ENCODE measurements at regions of chr19 and their contacts with region 1.

Region 1: GRCh38 chr19:2151339-2152229 is at the start of gene AP3D1:
- DNase-seq: peak; percentile 100
- H3K4me3 ChIP-seq: peak within 1 kb of the TSS; percentile 78 to 98 (median 91)
- H3K27ac ChIP-seq: peak within 1 kb of the TSS; percentile 84 to 89 (median 88)
- H3K4me1 ChIP-seq: peaks cover 27 to 55% (median 49%) of the 10 kb centered on the region in 4 donors
- H3K27me3 ChIP-seq: no peaks in the 10 kb centered on the region
- CTCF ChIP-seq: no peak
- EP300 ChIP-seq: no peak
- POLR2A ChIP-seq: no peak
- total RNA-seq, gene AP3D1: 76.0 to 156 (median 93.7) TPM

Region 2: GRCh38 chr19:2221918-2222317 is 70.3 kb after region 1 on chr19:
- intact Hi-C with region 1: loop called (anchors 5 kb)
- DNase-seq: no peak
- H3K4me3 ChIP-seq: no peak overlapping the region
- H3K27ac ChIP-seq: no peak overlapping the region
- H3K4me1 ChIP-seq: peaks cover 0 to 13% (median 6%) of the 10 kb centered on the region in 4 donors
- H3K27me3 ChIP-seq: no peaks in the 10 kb centered on the region
- CTCF ChIP-seq: peak in 2 of 3 experiments; percentile 16 to 32
- EP300 ChIP-seq: no peak
- POLR2A ChIP-seq: no peak

Region 3: GRCh38 chr19:2236314-2237050 is 84.9 kb after region 1 on chr19 and contains the starts of genes PLEKHJ1 and SF3A2:
- intact Hi-C with region 1: loop called (anchors 5 kb)
- DNase-seq: peak; percentile 99
- H3K4me3 ChIP-seq: peak within 1 kb of the TSS; percentile 88 to 100 (median 98)
- H3K27ac ChIP-seq: peak within 1 kb of the TSS; percentile 94 to 99 (median 96)
- H3K4me1 ChIP-seq: peaks cover 66 to 86% (median 71%) of the 10 kb centered on the region in 4 donors
- H3K27me3 ChIP-seq: no peaks in the 10 kb centered on the region
- CTCF ChIP-seq: peak; percentile 99 to 100 (median 100)
- EP300 ChIP-seq: no peak
- POLR2A ChIP-seq: peak; percentile 74
- total RNA-seq, gene PLEKHJ1: 41.9 to 69.8 (median 55.3) TPM
- total RNA-seq, gene SF3A2: 29.5 to 56.9 (median 35.3) TPM

Region 4: DNA sequence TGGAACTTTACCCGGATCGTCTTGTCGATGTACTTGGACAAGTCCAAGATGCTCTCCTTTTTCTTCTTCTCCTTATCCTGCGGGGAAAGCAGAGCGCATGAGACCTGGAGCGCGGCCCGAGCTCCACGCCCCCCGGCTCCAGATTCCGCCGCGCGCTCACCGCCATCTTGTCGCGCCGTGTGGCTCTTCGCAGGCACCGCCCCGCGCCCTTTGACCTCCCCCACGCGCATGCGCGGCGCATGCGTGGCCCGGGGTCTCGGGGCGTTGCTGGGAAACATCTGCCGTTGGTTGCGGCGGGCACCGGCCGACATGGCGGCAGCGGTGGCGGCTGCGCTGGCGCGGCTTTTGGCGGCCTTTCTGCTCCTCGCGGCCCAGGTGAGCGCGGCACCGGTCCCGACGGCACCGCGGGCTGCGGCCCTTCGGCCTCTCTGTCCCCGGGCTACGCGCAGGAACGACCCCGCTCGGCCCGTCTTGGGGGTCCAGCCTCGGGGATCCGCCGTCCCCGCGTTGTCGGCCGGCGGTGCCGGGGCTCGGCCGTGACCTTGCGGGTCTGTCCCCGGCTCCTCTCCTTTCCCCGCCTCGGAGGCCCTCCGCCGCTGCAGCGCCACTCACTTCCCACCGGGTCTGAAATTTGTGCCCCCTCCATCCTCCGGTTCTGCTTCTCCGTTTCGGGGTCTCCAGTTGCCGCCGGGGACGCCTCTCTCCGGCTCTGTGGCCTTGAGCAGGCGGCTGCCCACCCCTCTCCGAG is 177.0 kb after region 1 on chr19 and contains the starts of genes LSM7 and SPPL2B:
- intact Hi-C with region 1: loop called (anchors 5 kb)
- DNase-seq: peak; percentile 97
- H3K4me3 ChIP-seq: peak within 1 kb of the TSS; percentile 87 to 100 (median 92)
- H3K27ac ChIP-seq: peak within 1 kb of the TSS; percentile 76 to 85 (median 81)
- H3K4me1 ChIP-seq: peaks cover 55 to 74% (median 67%) of the 10 kb centered on the region in 4 donors
- H3K27me3 ChIP-seq: no peaks in the 10 kb centered on the region
- CTCF ChIP-seq: peak in 1 of 3 experiments; percentile 34
- EP300 ChIP-seq: no peak
- POLR2A ChIP-seq: no peak
- total RNA-seq, gene LSM7: 76.4 to 113 (median 106) TPM
- total RNA-seq, gene SPPL2B: 25.0 to 42.4 (median 29.9) TPM

Region 5: DNA sequence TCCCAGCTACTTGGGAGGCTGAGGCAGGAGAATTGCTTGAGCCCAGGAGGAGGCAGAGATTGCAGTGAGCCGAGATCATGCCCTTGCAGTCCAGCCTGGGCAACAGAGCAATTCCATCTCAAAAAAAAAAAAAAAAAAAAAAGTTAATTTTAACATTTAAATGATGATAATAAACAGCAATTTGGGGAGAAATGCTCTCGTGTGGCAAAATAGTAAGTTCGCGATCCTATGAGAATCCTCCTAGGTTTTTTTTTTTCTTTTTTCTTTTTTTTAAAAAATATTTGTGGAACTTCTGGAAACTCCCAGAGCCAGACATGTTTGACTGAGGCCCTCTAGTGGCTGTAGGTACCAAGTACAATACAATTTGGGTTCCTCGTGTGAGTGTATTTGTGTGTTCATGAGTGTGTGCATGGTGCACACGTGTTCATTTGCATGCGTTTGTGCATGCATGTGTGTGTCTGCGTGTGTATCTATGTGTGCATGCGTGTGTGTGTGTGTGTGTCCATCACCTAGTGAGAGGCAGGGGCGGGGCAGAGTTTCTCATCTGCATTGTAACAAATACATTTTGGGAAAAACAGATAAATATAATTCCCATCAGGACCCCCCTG is 239.6 kb after region 1 on chr19:
- intact Hi-C with region 1: loop called (anchors 10 kb)
- DNase-seq: no peak
- H3K4me3 ChIP-seq: no peak overlapping the region
- H3K27ac ChIP-seq: no peak overlapping the region
- H3K4me1 ChIP-seq: no peaks in the 10 kb centered on the region
- H3K27me3 ChIP-seq: peaks cover 0 to 46% (median under 1%) of the 10 kb centered on the region in 4 donors
- CTCF ChIP-seq: peak; percentile 75 to 84 (median 82)
- EP300 ChIP-seq: no peak
- POLR2A ChIP-seq: no peak